Activated CD4-positive, alpha-beta T cell treated with anti-CD3 and anti-CD28 coated beads for 36 hours (primary cell): ENCODE measurements at regions of chrX and their contacts with region 1.

Region 1: GRCh38 chrX:68828740-68829552 is at the start of gene EFNB1:
- DNase-seq: peak; percentile 90
- ATAC-seq: peak; percentile 86
- H3K4me3 Mint-ChIP-seq: peak within 1 kb of the TSS; percentile 79
- H3K27ac Mint-ChIP-seq: peak within 1 kb of the TSS; percentile 76
- H3K4me1 Mint-ChIP-seq: peaks cover 20% of the 10 kb centered on the region
- H3K27me3 Mint-ChIP-seq: no peaks in the 10 kb centered on the region
- total RNA-seq, gene EFNB1: 3.8 to 3.9 TPM

Region 2: DNA sequence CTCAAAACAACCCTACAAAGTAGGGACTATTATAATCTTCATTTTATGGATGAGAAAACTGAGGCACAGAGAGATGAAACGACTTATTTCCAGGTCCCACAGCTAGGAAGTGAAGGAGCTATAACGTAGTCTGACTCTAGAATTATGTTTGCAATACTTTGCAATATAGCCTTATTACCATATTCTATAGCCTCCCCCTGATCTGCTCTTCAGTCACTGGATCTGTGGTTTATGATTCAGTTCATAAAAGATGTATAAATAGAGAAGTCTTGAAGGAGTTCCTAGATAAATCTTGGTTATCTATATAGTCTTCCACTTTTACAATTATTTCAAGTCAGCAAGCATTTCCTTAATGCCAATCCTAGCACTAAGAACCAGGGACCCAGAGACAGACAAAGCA is 453.1 kb before region 1 on chrX:
- CTCF ChIA-PET with region 1: no interaction called
- POLR2A ChIA-PET with region 1: no interaction called
- intact Hi-C with region 1: no loop called
- DNase-seq: no peak
- ATAC-seq: no peak
- H3K4me3 Mint-ChIP-seq: no peak overlapping the region
- H3K27ac Mint-ChIP-seq: no peak overlapping the region
- H3K4me1 Mint-ChIP-seq: no peaks in the 10 kb centered on the region
- H3K27me3 Mint-ChIP-seq: no peaks in the 10 kb centered on the region

Region 3: GRCh38 chrX:68504237-68504636 is 324.7 kb before region 1 on chrX:
- CTCF ChIA-PET with region 1: interaction called, 3 read pairs
- POLR2A ChIA-PET with region 1: no interaction called
- intact Hi-C with region 1: loop called (anchors 5 to 10 kb)
- DNase-seq: peak; percentile 81
- ATAC-seq: peak; percentile 89
- H3K4me3 Mint-ChIP-seq: no peak overlapping the region
- H3K27ac Mint-ChIP-seq: peak overlapping the region; percentile 86
- H3K4me1 Mint-ChIP-seq: peaks cover 67% of the 10 kb centered on the region
- H3K27me3 Mint-ChIP-seq: no peaks in the 10 kb centered on the region

Region 4: DNA sequence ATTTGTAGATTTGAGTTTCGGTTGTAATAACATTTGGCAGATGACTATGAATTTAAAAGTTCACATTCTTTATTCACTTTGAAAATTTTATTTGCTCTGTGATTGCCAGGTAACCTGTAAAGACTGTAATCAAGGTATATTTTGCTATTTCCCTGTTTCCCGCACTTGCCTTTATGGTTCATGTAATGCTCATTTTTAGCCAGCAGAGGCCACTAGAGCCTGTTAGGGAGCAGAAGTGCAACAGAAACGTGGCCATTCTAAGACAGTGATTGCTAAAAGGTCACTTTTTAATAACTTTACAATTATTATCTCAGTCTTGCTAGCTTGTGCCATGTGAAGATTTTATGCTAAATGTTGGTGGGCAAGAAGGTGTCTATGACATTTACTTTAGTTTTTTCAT is 317.7 kb before region 1 on chrX:
- CTCF ChIA-PET with region 1: no interaction called
- POLR2A ChIA-PET with region 1: no interaction called
- intact Hi-C with region 1: loop called (anchors 5 to 10 kb)
- DNase-seq: peak; percentile 39
- ATAC-seq: peak; percentile 61
- H3K4me3 Mint-ChIP-seq: no peak overlapping the region
- H3K27ac Mint-ChIP-seq: no peak overlapping the region
- H3K4me1 Mint-ChIP-seq: peaks cover 24% of the 10 kb centered on the region
- H3K27me3 Mint-ChIP-seq: no peaks in the 10 kb centered on the region

Region 5: DNA sequence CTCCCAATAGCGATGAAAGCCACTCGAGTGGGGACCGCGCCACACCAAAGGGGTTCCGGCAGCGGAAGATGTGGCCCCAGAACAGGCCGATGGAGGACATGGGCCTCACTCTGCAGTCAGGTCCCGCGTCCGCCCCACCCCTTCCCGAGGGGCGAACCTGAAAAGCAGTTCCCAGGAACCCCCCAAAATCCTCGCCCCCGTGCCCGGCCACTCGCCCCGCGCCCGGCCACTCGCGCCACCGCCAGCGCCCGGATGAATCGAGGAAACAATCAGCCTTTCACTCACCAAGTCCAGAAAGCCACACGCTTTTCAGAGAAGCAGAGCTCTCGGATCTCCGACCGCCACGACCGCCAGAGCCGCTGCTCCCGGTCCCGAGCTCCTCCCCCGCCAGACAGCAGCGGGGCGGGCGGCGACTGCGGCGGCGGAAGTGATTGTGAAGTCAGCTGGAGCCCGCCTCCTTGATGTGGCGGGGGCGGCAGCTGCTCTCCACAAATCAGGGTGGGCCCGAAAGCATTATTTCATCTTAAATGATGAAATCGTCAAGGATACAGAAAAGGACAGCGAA is 336.2 kb after region 1 on chrX and contains the start of gene PJA1:
- CTCF ChIA-PET with region 1: interaction called, 3 read pairs
- POLR2A ChIA-PET with region 1: interaction called, 5 read pairs
- intact Hi-C with region 1: loop called (anchors 1 to 2 kb)
- DNase-seq: peak; percentile 86
- ATAC-seq: peak; percentile 82
- H3K4me3 Mint-ChIP-seq: peak within 1 kb of the TSS; percentile 79
- H3K27ac Mint-ChIP-seq: peak within 1 kb of the TSS; percentile 83
- H3K4me1 Mint-ChIP-seq: peaks cover 29% of the 10 kb centered on the region
- H3K27me3 Mint-ChIP-seq: no peaks in the 10 kb centered on the region
- total RNA-seq, gene PJA1: 18.9 to 19.5 TPM

Region 6: GRCh38 chrX:69285881-69286564 is 457.1 kb after region 1 on chrX:
- CTCF ChIA-PET with region 1: interaction called, 4 read pairs
- POLR2A ChIA-PET with region 1: no interaction called
- intact Hi-C with region 1: loop called (anchors 1 to 5 kb)
- DNase-seq: peak; percentile 72
- ATAC-seq: peak; percentile 66
- H3K4me3 Mint-ChIP-seq: peak overlapping the region; percentile 10
- H3K27ac Mint-ChIP-seq: no peak overlapping the region
- H3K4me1 Mint-ChIP-seq: no peaks in the 10 kb centered on the region
- H3K27me3 Mint-ChIP-seq: peaks cover 2% of the 10 kb centered on the region

Region 7: GRCh38 chrX:69387567-69388487 is 558.9 kb after region 1 on chrX:
- CTCF ChIA-PET with region 1: no interaction called
- POLR2A ChIA-PET with region 1: no interaction called
- intact Hi-C with region 1: loop called in 1 of 2 experiments (anchors 2 kb)
- DNase-seq: peak; percentile 53
- ATAC-seq: peak; percentile 65
- H3K4me3 Mint-ChIP-seq: no peak overlapping the region
- H3K27ac Mint-ChIP-seq: no peak overlapping the region
- H3K4me1 Mint-ChIP-seq: no peaks in the 10 kb centered on the region
- H3K27me3 Mint-ChIP-seq: peaks cover 2% of the 10 kb centered on the region